Natural killer cell (primary cell): ENCODE measurements at regions of chr9 and their contacts with region 1.

Region 1: GRCh38 chr9:133406480-133407307 is 11.1 kb downstream of the REXO4 start:
- DNase-seq: peak; percentile 68 to 88
- ATAC-seq: peak; percentile 83 to 96 (median 87)
- H3K4me3 ChIP-seq: no peak overlapping the region
- H3K4me3 Mint-ChIP-seq: no peak overlapping the region
- H3K27ac ChIP-seq: no peak overlapping the region
- H3K27ac Mint-ChIP-seq: peak overlapping the region in 1 of 2 donors; percentile 45
- H3K4me1 ChIP-seq: no peaks in the 10 kb centered on the region
- H3K4me1 Mint-ChIP-seq: peaks cover 0 to 5% of the 10 kb centered on the region in 2 donors
- H3K27me3 ChIP-seq: no peaks in the 10 kb centered on the region
- H3K27me3 Mint-ChIP-seq: no peaks in the 10 kb centered on the region
- CTCF ChIP-seq: peak; percentile 85

Region 2: GRCh38 chr9:133238851-133239532 is 167.7 kb before region 1 on chr9:
- intact Hi-C with region 1: loop called (anchors 1 kb)
- DNase-seq: peak; percentile 59 to 80
- ATAC-seq: peak; percentile 85 to 95 (median 88)
- H3K4me3 ChIP-seq: no peak overlapping the region
- H3K4me3 Mint-ChIP-seq: peak overlapping the region; percentile 79
- H3K27ac ChIP-seq: no peak overlapping the region
- H3K27ac Mint-ChIP-seq: peak overlapping the region in 1 of 2 donors; percentile 59
- H3K4me1 ChIP-seq: peaks cover 13% of the 10 kb centered on the region
- H3K4me1 Mint-ChIP-seq: peaks cover 5 to 6% of the 10 kb centered on the region in 2 donors
- H3K27me3 ChIP-seq: peaks cover 4% of the 10 kb centered on the region
- H3K27me3 Mint-ChIP-seq: peaks cover 0 to 10% of the 10 kb centered on the region in 2 donors
- CTCF ChIP-seq: peak; percentile 48

Region 3: GRCh38 chr9:133485361-133486260 is 78.9 kb after region 1 on chr9:
- intact Hi-C with region 1: loop called (anchors 1 kb)
- DNase-seq: no peak
- ATAC-seq: peak in 2 of 3 donors; percentile 46 to 57
- H3K4me3 ChIP-seq: no peak overlapping the region
- H3K4me3 Mint-ChIP-seq: peak overlapping the region; percentile 37
- H3K27ac ChIP-seq: no peak overlapping the region
- H3K27ac Mint-ChIP-seq: no peak overlapping the region
- H3K4me1 ChIP-seq: peaks cover 6% of the 10 kb centered on the region
- H3K4me1 Mint-ChIP-seq: peaks cover 0 to 4% of the 10 kb centered on the region in 2 donors
- H3K27me3 ChIP-seq: no peaks in the 10 kb centered on the region
- H3K27me3 Mint-ChIP-seq: peaks cover 3 to 7% of the 10 kb centered on the region in 2 donors
- CTCF ChIP-seq: no peak